ENCODE measurements at regions of chr17 and their contacts with region 1.

Region 1: DNA sequence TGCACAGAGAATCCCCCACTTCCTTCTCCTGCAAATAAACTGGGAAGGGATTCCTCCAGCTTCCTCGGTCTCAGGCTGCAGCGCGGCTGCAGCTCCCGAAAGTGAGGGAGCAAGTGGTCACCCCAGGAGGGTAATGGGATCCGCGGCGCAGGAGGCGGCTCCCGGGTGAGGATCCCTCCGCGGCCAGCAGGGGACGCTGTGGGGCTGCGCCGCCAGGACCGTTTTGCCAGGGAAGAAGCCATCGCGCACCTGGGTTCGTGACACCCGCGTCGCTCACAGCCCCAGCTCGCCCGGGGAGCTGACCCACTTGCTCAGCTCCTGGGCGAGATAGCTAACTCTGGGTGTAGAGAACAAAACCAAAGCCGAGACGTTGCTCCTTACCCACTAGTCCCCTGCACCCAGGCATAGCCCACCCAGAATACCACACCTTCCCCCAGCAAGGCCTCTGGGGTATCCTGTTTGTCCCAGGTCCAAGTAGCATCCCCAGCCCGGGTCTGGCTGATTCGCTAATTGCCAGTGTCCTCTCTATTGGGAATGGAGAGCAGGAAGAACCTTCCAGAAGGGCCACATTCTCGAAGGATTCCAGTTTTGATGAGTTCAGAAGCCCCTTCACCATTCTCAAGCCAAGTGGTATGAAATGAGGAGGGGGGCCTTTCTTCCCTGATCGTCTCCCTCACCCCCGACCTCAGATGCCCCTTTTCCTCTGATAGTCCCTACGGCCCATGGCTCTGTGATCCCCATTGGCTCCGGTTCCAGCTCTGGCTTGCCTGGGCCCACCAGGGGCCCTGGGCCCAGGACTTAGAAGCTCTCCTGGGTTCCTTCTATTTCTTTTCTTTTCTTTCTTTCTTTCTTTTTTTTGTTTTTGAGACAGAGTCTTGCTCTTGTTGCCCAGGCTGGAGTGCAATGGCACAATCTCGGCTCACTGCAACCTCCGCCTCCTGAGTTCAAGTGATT is 14.1 kb downstream of the CYGB start:
- DNase-seq: peak; percentile 88
- H3K4me3 Mint-ChIP-seq: no peak overlapping the region
- H3K27ac Mint-ChIP-seq: no peak overlapping the region
- H3K4me1 Mint-ChIP-seq: peaks cover 17% of the 10 kb centered on the region
- H3K27me3 Mint-ChIP-seq: peaks cover 2% of the 10 kb centered on the region

Region 2: DNA sequence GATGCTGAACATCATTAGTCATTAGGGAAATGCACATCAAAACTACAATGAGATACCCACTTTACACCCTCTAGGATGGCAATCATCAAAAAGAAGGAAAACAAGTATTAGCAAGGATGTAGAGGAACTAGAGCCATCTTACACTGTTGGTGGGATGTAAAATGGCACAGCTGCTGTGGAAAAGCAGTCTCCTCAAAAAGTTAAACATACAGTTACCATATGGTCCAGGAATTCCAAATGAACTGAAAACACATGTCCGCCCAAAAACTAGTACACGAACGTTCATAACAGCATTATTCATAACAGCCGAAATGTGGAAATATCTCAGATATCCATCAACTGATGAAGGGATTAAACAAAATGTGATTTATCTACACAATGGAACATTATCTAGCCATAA is 589.6 kb before region 1 on chr17:
- CTCF ChIA-PET with region 1: no interaction called
- POLR2A ChIA-PET with region 1: no interaction called
- intact Hi-C with region 1: no loop called
- DNase-seq: no peak
- H3K4me3 Mint-ChIP-seq: no peak overlapping the region
- H3K27ac Mint-ChIP-seq: no peak overlapping the region
- H3K4me1 Mint-ChIP-seq: no peaks in the 10 kb centered on the region
- H3K27me3 Mint-ChIP-seq: no peaks in the 10 kb centered on the region

Region 3: GRCh38 chr17:76265890-76266624 is 257.3 kb before region 1 on chr17:
- CTCF ChIA-PET with region 1: no interaction called
- POLR2A ChIA-PET with region 1: no interaction called
- intact Hi-C with region 1: no loop called
- DNase-seq: peak; percentile 70
- H3K4me3 Mint-ChIP-seq: peak overlapping the region; percentile 92
- H3K27ac Mint-ChIP-seq: peak overlapping the region; percentile 97
- H3K4me1 Mint-ChIP-seq: peaks cover 51% of the 10 kb centered on the region
- H3K27me3 Mint-ChIP-seq: no peaks in the 10 kb centered on the region

Region 4: GRCh38 chr17:76547184-76547641 is 23.9 kb after region 1 on chr17:
- CTCF ChIA-PET with region 1: interaction called, 36 read pairs
- POLR2A ChIA-PET with region 1: no interaction called
- intact Hi-C with region 1: no loop called
- DNase-seq: peak; percentile 48
- H3K4me3 Mint-ChIP-seq: no peak overlapping the region
- H3K27ac Mint-ChIP-seq: no peak overlapping the region
- H3K4me1 Mint-ChIP-seq: no peaks in the 10 kb centered on the region
- H3K27me3 Mint-ChIP-seq: peaks cover 11% of the 10 kb centered on the region

Region 5: GRCh38 chr17:76585818-76586593 is 62.6 kb after region 1 on chr17 and contains the start of gene ST6GALNAC2:
- CTCF ChIA-PET with region 1: interaction called, 14 read pairs
- POLR2A ChIA-PET with region 1: no interaction called
- intact Hi-C with region 1: no loop called
- DNase-seq: peak; percentile 53
- H3K4me3 Mint-ChIP-seq: peak within 1 kb of the TSS; percentile 57
- H3K27ac Mint-ChIP-seq: no peak within 1 kb of the TSS
- H3K4me1 Mint-ChIP-seq: peaks cover 13% of the 10 kb centered on the region
- H3K27me3 Mint-ChIP-seq: peaks cover 46% of the 10 kb centered on the region
- total RNA-seq, gene ST6GALNAC2: 0.19 to 0.51 TPM

Region 6: DNA sequence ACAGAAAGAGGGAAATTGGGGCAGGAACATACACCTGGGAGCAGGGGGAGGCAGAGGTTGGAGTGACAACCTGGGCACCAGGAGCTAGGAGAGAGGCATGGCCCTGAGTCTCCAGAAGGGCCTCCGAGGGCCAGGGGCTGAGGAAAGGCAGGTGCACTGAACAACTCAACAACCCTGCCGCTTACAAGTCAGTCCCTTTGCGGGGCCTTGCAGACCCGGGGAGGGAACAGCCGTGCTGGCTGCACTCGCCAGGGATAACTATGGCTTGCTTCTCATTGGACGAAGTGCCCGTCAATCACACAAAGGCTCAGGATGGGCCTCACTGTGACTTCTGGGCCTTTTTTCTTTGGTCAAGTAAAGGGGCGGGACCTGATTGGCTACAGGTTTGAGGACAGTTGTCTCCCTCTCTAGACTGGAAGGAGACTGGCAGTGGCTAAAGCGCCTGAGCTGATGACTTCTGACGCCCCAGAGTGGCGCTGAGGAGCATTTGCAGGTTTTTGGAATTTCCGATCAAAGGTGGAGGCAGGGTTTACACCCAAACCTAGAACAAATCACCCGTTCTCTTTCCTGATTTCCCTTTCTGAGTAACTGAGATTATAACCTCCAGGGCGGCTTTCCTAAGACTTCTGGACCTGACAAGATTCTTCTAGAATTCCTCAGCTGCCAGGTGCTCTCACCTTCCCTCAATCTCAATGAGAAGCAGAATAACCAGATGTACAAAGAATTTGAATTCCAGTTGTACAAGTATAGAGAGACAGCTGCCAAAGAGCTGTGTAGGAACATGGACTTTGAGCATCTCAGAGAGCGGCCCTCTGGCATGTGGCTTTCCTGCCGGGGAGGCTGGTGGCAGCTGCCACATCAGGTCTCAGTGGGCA is 89.9 kb after region 1 on chr17:
- CTCF ChIA-PET with region 1: interaction called, 10 read pairs
- POLR2A ChIA-PET with region 1: no interaction called
- intact Hi-C with region 1: no loop called
- DNase-seq: no peak
- H3K4me3 Mint-ChIP-seq: no peak overlapping the region
- H3K27ac Mint-ChIP-seq: no peak overlapping the region
- H3K4me1 Mint-ChIP-seq: no peaks in the 10 kb centered on the region
- H3K27me3 Mint-ChIP-seq: peaks cover 2% of the 10 kb centered on the region

Region 7: DNA sequence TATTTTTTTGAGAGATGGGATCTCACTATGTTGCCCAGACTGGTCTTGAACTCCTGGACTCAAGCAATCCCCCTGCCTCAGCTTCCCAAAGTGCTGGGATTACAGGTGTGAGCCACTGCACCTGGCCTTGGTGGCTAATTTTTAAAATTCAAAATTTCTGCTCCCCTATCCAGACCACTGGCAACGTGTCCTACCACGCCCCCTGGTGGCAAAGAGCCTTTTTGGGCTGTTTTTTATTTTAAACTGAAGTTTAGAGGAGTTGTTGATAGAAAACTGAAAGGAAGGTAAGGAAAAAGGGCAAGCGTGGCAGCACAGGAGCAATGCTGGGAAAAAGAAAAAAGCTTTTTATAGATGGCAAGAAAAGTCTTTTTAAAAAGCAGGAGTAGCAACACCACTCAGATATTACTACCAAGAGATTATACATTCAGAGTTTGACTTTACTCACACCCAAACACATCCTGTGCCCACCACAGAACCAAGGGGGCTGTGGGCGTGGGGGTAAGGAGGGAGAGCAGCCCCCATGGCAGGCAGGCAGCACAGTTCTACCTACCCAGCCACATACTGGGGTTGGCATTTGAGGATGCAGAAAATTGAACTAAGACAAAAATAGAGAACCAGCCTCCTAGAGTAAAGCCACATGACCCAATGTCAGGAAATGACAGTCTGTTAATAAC is 191.6 kb after region 1 on chr17:
- CTCF ChIA-PET with region 1: interaction called, 20 read pairs
- POLR2A ChIA-PET with region 1: no interaction called
- intact Hi-C with region 1: no loop called
- DNase-seq: peak; percentile 79
- H3K4me3 Mint-ChIP-seq: no peak overlapping the region
- H3K27ac Mint-ChIP-seq: peak overlapping the region; percentile 24
- H3K4me1 Mint-ChIP-seq: peaks cover 29% of the 10 kb centered on the region
- H3K27me3 Mint-ChIP-seq: no peaks in the 10 kb centered on the region